ENCODE measurements at regions of chr20 and their contacts with region 1.

Region 1: DNA sequence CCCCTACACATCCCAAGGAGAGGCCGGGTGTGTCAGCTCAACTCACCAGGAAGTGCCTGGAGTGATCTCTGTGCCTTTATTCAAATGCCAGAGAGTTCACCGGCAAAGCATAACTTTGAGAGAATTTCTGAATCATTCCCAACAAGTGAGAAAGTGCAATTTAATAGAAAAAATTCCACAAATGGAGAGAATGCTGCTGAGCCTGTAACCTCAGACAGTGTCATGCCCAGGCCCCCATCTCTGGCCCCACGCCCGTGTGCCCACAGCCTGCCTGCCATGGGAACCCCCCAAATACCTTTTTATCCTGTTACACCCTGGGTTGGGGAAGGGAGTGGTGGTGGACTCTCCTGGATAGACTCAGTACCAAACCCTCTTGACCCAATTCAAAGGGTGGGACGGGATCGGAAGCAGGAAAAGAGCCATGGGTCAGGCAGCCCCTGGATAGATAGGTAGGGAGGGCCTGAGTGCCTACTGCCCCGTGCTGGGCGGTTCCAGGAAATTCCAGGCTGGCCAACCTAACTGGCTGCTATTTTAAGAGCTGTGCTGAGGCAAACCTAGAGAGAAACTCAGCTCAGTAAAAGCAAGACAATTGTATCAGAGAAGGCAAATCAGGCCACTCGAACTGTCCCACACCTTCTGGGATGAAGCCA is 179.0 kb upstream of the FOXA2 start:
- DNase-seq: peak; percentile 46
- H3K4me3 ChIP-seq: peak overlapping the region; percentile 44
- H3K27ac ChIP-seq: peak overlapping the region; percentile 72
- H3K4me1 ChIP-seq: peaks cover 23% of the 10 kb centered on the region
- H3K27me3 ChIP-seq: no peaks in the 10 kb centered on the region
- CTCF ChIP-seq: no peak

Region 2: GRCh38 chr20:22716821-22717351 is 46.5 kb before region 1 on chr20:
- intact Hi-C with region 1: loop called (anchors 10 kb)
- DNase-seq: no peak
- H3K4me3 ChIP-seq: no peak overlapping the region
- H3K27ac ChIP-seq: peak overlapping the region; percentile 78
- H3K4me1 ChIP-seq: peaks cover 45% of the 10 kb centered on the region
- H3K27me3 ChIP-seq: no peaks in the 10 kb centered on the region
- CTCF ChIP-seq: no peak